Naive thymus-derived CD8-positive, alpha-beta T cell (primary cell): ENCODE measurements at regions of chr4 and their contacts with region 1.

Region 1: DNA sequence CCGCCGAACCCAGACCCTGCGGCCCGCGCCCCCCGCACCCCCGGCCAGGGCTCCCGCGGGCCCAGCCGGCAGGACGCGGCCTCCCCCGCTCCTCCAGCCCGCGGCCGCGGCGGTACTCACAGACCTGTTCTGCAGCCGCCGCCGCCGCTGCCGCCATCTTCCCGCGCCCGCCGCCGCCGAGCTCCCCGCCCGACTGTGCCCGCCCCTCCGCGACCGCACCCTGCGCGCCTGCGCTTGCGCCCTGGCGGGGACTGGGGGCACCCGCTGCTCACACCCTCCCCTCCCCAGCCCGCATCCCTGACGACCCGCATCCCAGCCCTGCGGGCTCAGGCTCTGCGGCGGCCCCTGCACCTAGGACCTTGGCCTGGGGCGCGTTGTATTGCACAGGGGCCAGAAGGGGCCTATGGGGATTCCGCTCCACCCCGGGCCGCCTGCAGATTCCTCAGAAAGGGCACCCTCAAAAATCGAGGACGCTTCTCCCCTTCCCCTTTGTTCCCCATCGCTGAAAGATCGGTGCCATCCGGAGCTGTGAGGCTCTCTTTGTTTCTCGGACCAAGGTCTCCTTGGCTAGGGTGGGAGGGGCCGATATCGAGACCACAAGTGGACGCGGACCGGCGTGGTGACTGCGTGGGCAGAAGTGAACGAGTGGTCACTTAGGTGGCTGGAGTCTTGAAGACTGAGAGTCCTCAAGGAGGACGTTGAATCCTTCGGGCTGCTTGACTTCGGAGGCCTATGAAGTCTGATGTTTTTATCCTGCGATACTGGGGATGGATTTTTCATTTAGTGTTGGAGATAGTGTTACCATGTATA is at the start of gene SGCB:
- DNase-seq: peak; percentile 55 to 82 (median 70)
- ATAC-seq: peak; percentile 93 to 97
- H3K4me3 Mint-ChIP-seq: peak within 1 kb of the TSS; percentile 79 to 93 (median 86)
- H3K27ac Mint-ChIP-seq: peak within 1 kb of the TSS in 9 of 10 donors; percentile 41 to 87 (median 79)
- H3K4me1 Mint-ChIP-seq: peaks cover 15 to 26% (median 23%) of the 10 kb centered on the region in 4 donors
- H3K27me3 Mint-ChIP-seq: peaks cover 6 to 31% (median 19%) of the 10 kb centered on the region in 5 donors
- polyA plus RNA-seq, gene SGCB: 3.5 to 6.5 (median 4.3) TPM

Region 2: DNA sequence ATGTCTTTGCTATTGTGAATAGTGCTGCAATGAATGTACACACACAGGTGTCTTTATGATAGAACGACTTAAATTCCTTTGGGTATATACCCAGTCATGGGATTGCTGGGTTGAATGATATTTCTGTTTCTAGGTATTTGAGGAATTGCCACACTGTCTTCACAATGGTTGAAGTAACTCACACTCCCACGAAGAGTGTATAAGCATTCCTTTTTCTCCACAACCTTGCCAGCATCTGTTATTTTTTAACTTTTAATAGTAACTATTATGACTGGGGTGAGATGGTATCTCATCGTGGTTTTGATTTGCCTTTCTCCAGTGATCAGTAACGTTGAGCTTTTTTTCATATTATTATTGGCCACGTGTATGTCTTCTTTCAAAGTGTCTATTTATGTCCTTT is 213.0 kb before region 1 on chr4:
- POLR2A ChIA-PET with region 1: no interaction called
- DNase-seq: no peak
- ATAC-seq: no peak
- H3K4me3 Mint-ChIP-seq: no peak overlapping the region
- H3K27ac Mint-ChIP-seq: no peak overlapping the region
- H3K4me1 Mint-ChIP-seq: no peaks in the 10 kb centered on the region
- H3K27me3 Mint-ChIP-seq: peaks cover 3 to 11% (median 5%) of the 10 kb centered on the region in 5 donors

Region 3: GRCh38 chr4:51842554-51843308 is 195.6 kb before region 1 on chr4 and contains the start of gene DCUN1D4:
- POLR2A ChIA-PET with region 1: interaction called, 16 read pairs
- DNase-seq: peak; percentile 95 to 99 (median 96)
- ATAC-seq: peak; percentile 87 to 88
- H3K4me3 Mint-ChIP-seq: peak within 1 kb of the TSS; percentile 94 to 99 (median 97)
- H3K27ac Mint-ChIP-seq: peak within 1 kb of the TSS; percentile 84 to 97 (median 94)
- H3K4me1 Mint-ChIP-seq: peaks cover 11 to 37% (median 21%) of the 10 kb centered on the region in 4 donors
- H3K27me3 Mint-ChIP-seq: peaks cover 0 to 3% (median 0%) of the 10 kb centered on the region in 5 donors
- polyA plus RNA-seq, gene DCUN1D4: 14.5 to 16.0 (median 15.9) TPM

Region 4: GRCh38 chr4:52051619-52052474 is 13.5 kb after region 1 on chr4:
- POLR2A ChIA-PET with region 1: no interaction called
- DNase-seq: no peak
- ATAC-seq: peak; percentile 38 to 46
- H3K4me3 Mint-ChIP-seq: peak overlapping the region; percentile 48 to 78 (median 66)
- H3K27ac Mint-ChIP-seq: no peak overlapping the region
- H3K4me1 Mint-ChIP-seq: peaks cover 7 to 23% (median 15%) of the 10 kb centered on the region in 4 donors
- H3K27me3 Mint-ChIP-seq: peaks cover 47 to 70% (median 69%) of the 10 kb centered on the region in 5 donors